ENCODE measurements at regions of chr18 and their contacts with region 1.

Region 1: GRCh38 chr18:13435596-13436327 is 217.2 kb downstream of the LDLRAD4 start:
- DNase-seq: no peak
- ATAC-seq: no peak
- H3K4me3 Mint-ChIP-seq: no peak overlapping the region
- H3K27ac Mint-ChIP-seq: no peak overlapping the region
- H3K4me1 Mint-ChIP-seq: peaks cover 13% of the 10 kb centered on the region
- H3K27me3 Mint-ChIP-seq: no peaks in the 10 kb centered on the region
- CTCF ChIP-seq: no peak

Region 2: GRCh38 chr18:13381944-13382365 is 53.8 kb before region 1 on chr18:
- CTCF ChIA-PET with region 1: no interaction called
- POLR2A ChIA-PET with region 1: no interaction called
- intact Hi-C with region 1: loop called (anchors 5 kb)
- DNase-seq: no peak
- ATAC-seq: peak; percentile 79
- H3K4me3 Mint-ChIP-seq: peak overlapping the region; percentile 82
- H3K27ac Mint-ChIP-seq: peak overlapping the region; percentile 87
- H3K4me1 Mint-ChIP-seq: peaks cover 25% of the 10 kb centered on the region
- H3K27me3 Mint-ChIP-seq: no peaks in the 10 kb centered on the region
- CTCF ChIP-seq: no peak

Region 3: DNA sequence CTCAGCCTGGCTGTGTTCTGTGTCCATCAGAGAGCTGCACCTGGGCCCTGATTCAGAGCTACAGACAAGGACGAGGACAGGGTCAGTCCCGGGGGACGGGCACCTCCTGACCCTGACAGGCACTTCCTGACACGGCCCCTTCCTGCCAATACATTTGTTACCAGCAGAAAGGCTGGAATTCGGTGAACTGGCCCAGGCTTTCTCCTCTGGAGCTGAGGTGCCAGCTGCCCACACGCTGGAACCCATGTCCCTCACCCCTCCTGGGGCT is 708.8 kb after region 1 on chr18:
- CTCF ChIA-PET with region 1: no interaction called
- POLR2A ChIA-PET with region 1: no interaction called
- intact Hi-C with region 1: no loop called
- DNase-seq: no peak
- ATAC-seq: no peak
- H3K4me3 Mint-ChIP-seq: no peak overlapping the region
- H3K27ac Mint-ChIP-seq: no peak overlapping the region
- H3K4me1 Mint-ChIP-seq: no peaks in the 10 kb centered on the region
- H3K27me3 Mint-ChIP-seq: no peaks in the 10 kb centered on the region
- CTCF ChIP-seq: no peak

Measured in activated B cell treated with CpG ODN at 0.5 μM for 24 hours (primary cell).